ENCODE measurements at regions of chr14 and their contacts with region 1.

Region 1: DNA sequence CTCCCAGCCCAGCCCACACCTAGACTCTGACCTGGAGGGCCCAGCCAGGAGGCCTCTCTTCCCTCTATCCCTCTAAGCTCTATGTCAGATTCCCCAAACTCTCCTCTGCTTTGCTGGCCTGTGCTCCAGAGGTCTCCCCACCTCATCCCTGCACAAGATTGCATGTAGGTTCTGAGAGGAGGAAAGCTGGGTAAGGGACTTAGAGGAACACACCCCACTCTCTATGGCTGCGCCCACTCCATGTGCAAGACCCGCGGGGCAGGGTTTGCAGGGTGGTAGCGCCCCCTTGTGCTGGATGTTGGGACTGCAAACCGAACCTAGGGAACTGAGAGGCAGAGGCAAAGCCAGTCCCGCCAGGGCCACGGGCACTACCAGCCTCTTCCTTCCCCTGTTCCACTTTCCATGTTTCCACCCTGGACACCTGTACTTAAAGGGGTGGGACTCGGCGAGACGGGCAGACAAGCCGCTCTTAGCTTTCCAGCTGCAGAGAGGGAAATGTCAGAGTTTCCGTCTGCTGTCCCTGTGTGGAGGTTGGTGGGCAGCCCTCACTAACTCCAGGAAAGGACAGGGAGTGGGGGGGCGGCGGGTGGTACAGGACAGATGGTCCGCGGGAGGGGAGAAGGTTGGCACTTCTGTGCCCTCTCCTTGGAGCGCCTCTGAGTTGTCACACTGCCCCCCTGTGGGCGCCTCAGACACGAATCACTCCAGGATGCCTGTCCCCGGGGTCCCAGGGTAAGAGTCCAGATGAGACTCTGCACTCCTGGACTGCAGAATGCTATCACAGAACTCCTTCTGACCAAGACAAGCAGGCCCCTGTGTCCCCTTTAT is 16.8 kb downstream of the MMP14 start:
- DNase-seq: peak; percentile 97
- ATAC-seq: peak; percentile 94
- H3K4me3 Mint-ChIP-seq: peak overlapping the region; percentile 79
- H3K27ac Mint-ChIP-seq: peak overlapping the region; percentile 78
- H3K4me1 Mint-ChIP-seq: peaks cover 6% of the 10 kb centered on the region
- H3K27me3 Mint-ChIP-seq: peaks cover 6% of the 10 kb centered on the region
- CTCF ChIP-seq: peak; percentile 81

Region 2: GRCh38 chr14:22472935-22473854 is 380.0 kb before region 1 on chr14:
- CTCF ChIA-PET with region 1: no interaction called
- POLR2A ChIA-PET with region 1: no interaction called
- intact Hi-C with region 1: loop called (anchors 2 kb)
- DNase-seq: no peak
- ATAC-seq: peak; percentile 64
- H3K4me3 Mint-ChIP-seq: peak overlapping the region; percentile 3
- H3K27ac Mint-ChIP-seq: peak overlapping the region; percentile 65
- H3K4me1 Mint-ChIP-seq: peaks cover 89% of the 10 kb centered on the region
- H3K27me3 Mint-ChIP-seq: no peaks in the 10 kb centered on the region
- CTCF ChIP-seq: peak; percentile 40

Region 3: DNA sequence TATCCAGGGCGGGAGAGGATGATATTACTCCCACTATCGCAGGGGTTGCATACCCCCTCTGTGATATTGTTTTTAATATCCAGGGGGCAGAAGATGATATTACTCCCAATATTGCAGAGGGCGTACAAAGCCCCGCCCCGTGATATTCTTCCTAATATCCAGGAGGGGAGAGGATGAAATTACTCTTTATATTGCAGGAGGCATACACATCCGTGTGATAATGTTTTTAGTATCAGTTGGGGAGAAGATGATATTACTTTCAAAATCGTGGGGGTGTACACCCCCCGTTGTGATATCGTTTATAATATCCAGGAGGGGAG is 139.6 kb before region 1 on chr14:
- CTCF ChIA-PET with region 1: no interaction called
- POLR2A ChIA-PET with region 1: interaction called, 3 read pairs
- intact Hi-C with region 1: loop called (anchors 2 kb)
- DNase-seq: no peak
- ATAC-seq: no peak
- H3K4me3 Mint-ChIP-seq: peak overlapping the region; percentile 88
- H3K27ac Mint-ChIP-seq: peak overlapping the region; percentile 78
- H3K4me1 Mint-ChIP-seq: peaks cover 13% of the 10 kb centered on the region
- H3K27me3 Mint-ChIP-seq: peaks cover 29% of the 10 kb centered on the region
- CTCF ChIP-seq: no peak

Region 4: DNA sequence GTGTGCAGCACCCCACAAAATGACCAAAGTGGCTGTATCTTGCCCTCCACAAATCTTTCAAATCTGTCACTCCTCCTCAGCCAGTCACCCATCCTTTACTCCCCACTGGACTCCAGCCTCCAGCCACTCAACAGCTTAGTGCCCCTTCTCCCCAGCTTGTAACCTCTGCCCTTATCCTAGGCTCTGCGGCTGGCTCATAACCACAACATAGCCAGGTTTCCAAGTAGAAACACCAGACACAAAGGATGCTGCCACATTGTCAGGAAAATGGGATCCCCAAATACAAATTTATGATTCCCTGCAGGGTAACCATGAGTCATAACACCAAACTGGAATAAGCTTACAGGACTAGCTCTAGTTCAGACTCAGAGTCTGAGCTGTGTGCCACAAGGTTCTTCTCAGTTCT is 71.6 kb before region 1 on chr14:
- CTCF ChIA-PET with region 1: interaction called, 9 read pairs
- POLR2A ChIA-PET with region 1: interaction called, 5 read pairs
- intact Hi-C with region 1: loop called (anchors 1 kb)
- DNase-seq: no peak
- ATAC-seq: no peak
- H3K4me3 Mint-ChIP-seq: no peak overlapping the region
- H3K27ac Mint-ChIP-seq: peak overlapping the region; percentile 76
- H3K4me1 Mint-ChIP-seq: peaks cover 15% of the 10 kb centered on the region
- H3K27me3 Mint-ChIP-seq: no peaks in the 10 kb centered on the region
- CTCF ChIP-seq: no peak

Region 5: GRCh38 chr14:22829661-22830442 is 23.3 kb before region 1 on chr14 and contains the start of gene MRPL52:
- CTCF ChIA-PET with region 1: interaction called, 64 read pairs
- POLR2A ChIA-PET with region 1: interaction called, 3 read pairs
- intact Hi-C with region 1: no loop called
- DNase-seq: peak; percentile 76
- ATAC-seq: peak; percentile 94
- H3K4me3 Mint-ChIP-seq: peak within 1 kb of the TSS; percentile 93
- H3K27ac Mint-ChIP-seq: peak within 1 kb of the TSS; percentile 97
- H3K4me1 Mint-ChIP-seq: peaks cover 27% of the 10 kb centered on the region
- H3K27me3 Mint-ChIP-seq: no peaks in the 10 kb centered on the region
- CTCF ChIP-seq: no peak
- total RNA-seq, gene MRPL52: 142 and 150 TPM in 2 replicates

Region 6: DNA sequence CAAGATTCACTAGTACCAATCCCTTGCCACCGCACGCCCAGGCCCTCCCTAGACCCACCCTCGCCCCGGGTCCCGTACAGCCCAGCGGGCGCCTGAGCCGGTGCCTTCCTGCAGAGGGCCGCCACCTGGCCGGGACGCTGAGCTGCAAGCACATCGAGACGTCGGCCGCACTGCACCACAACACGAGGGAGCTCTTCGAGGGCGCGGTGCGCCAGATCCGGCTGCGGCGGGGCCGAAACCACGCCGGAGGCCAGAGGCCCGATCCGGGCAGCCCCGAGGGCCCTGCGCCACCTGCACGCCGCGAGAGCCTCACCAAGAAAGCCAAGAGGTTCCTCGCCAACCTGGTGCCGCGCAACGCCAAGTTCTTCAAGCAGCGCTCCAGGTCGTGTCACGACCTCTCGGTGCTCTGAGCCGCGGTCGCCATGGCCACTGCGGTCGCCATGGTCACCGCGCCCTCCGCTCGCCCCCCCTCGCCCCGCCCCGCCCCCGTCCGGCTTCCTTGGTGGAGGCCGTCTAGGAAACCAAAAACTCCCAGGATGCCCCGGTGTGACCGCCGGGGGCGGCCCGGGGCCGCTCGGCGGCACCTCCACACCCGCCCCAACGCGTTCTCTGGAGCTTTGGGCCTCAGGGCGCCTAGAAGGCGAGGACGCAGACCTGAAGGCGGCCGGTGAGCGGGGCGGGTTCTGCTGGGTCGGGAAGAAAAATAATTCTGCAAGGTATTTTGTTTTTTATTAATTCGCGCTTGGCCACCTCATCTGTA is 33.5 kb after region 1 on chr14:
- CTCF ChIA-PET with region 1: interaction called, 7 read pairs
- POLR2A ChIA-PET with region 1: interaction called, 6 read pairs
- intact Hi-C with region 1: loop called (anchors 1 kb)
- DNase-seq: peak; percentile 71
- ATAC-seq: peak; percentile 55
- H3K4me3 Mint-ChIP-seq: peak overlapping the region; percentile 90
- H3K27ac Mint-ChIP-seq: peak overlapping the region; percentile 97
- H3K4me1 Mint-ChIP-seq: peaks cover 80% of the 10 kb centered on the region
- H3K27me3 Mint-ChIP-seq: no peaks in the 10 kb centered on the region
- CTCF ChIP-seq: no peak

Region 7: DNA sequence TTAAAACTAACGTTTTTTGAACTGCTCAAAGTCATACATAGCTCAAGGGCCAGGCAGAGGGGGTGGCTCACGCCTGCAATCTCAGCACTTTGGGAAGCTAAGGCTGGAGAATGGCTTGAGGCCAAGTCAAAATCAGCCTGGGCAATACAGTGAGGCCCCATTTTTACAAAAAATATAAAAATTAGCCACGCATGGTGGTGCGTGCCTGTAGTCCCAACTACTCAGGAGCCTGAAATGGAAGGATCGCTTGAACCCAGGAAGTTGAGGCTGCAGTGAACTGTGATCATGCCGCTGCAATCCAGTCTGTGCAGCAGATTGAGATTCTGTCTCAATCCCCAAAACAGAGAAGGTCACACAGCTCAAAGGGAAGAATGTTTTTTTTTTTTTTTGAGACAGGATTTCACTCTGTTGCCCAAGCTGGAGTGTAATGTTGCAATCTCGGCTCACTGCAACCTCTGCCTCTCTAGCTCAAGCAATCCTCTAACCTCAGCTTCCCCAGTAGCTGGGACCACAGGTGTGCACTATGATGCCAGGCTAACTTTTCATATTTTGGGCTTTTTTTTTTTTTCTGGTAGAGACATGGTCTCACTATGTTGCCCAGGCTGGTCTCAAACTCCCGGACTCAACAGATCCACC is 62.9 kb after region 1 on chr14:
- CTCF ChIA-PET with region 1: no interaction called
- POLR2A ChIA-PET with region 1: no interaction called
- intact Hi-C with region 1: no loop called
- DNase-seq: no peak
- ATAC-seq: no peak
- H3K4me3 Mint-ChIP-seq: no peak overlapping the region
- H3K27ac Mint-ChIP-seq: no peak overlapping the region
- H3K4me1 Mint-ChIP-seq: peaks cover 65% of the 10 kb centered on the region
- H3K27me3 Mint-ChIP-seq: no peaks in the 10 kb centered on the region
- CTCF ChIP-seq: no peak

Region 8: DNA sequence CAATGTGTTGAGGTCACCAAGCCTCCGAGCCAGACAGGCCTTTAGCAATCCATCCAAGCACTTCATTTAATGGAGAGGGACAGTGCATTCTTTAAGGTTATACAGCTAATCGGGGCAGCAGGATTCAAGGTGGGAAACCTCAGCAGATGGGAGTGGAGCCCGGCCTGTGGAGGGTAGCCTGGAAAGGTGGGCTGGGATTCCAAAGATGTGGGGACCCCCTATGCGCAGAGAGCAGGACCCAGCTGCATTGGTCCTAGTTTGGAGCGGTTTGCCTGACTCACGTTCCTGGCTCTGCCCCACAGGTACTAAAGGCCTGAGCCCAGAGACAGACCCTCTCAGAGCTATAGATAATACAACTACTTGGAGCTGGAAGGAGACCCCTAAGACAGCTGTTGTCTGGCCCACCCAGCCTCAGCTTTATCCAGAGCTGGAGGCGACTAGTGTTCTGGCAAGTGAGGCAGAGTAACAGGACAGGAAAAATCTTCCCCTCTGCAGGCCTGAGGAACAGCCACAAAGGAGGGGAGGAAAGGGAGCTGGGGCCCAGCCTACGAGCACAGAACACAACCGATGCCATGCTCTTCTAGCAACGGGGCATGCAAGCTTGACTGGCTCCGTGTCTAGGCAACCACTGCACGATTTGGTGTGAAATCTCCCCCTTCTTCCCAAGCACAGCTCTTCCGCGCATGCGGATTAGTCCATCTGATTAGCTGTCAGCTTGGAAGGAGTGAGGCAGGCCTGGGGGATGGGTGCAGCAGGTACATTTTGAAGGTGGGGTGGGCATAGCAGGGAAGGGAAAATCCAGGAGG is 583.4 kb after region 1 on chr14:
- CTCF ChIA-PET with region 1: no interaction called
- POLR2A ChIA-PET with region 1: no interaction called
- intact Hi-C with region 1: no loop called
- DNase-seq: no peak
- ATAC-seq: no peak
- H3K4me3 Mint-ChIP-seq: no peak overlapping the region
- H3K27ac Mint-ChIP-seq: no peak overlapping the region
- H3K4me1 Mint-ChIP-seq: no peaks in the 10 kb centered on the region
- H3K27me3 Mint-ChIP-seq: peaks cover 29% of the 10 kb centered on the region
- CTCF ChIP-seq: no peak

Region 9: DNA sequence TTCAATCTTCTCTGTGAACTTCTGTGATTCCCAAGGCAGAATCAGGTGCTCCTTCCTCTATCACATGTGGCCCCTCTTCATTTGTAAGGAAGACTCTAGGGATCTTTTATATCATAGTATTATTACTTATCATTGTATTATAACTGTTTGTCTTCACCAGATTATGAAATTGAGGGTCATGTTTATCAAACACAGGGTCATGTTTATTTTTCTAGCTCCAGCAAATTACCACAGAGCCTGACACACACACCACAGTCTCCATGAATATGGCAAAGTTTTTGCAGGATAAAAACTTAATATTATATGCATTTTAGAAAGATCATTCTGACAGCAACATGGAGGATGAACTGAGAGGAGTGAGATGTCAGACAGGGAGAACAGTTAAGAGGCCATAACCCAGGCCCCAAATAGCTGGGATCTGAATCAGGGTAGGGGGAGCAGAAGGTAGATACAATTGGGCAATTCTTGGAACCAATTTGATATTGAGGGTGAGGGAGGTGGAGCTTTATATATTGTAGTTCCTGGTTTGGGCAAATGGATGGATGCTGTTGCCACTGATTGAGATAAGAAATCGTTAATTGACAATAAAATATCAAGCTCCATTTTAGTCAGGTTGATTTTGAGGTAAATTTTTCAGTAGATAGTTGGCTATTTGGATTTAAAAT is 913.7 kb after region 1 on chr14:
- CTCF ChIA-PET with region 1: no interaction called
- POLR2A ChIA-PET with region 1: no interaction called
- intact Hi-C with region 1: no loop called
- DNase-seq: no peak
- ATAC-seq: no peak
- H3K4me3 Mint-ChIP-seq: no peak overlapping the region
- H3K27ac Mint-ChIP-seq: no peak overlapping the region
- H3K4me1 Mint-ChIP-seq: no peaks in the 10 kb centered on the region
- H3K27me3 Mint-ChIP-seq: peaks cover 10% of the 10 kb centered on the region
- CTCF ChIP-seq: no peak